Breast epithelium (tissue), 4 donors: ENCODE measurements at regions of chr2 and their contacts with region 1.

Region 1: GRCh38 chr2:216149741-216150140 is 40.6 kb downstream of the XRCC5 start:
- DNase-seq: no peak
- H3K4me3 ChIP-seq: no peak overlapping the region
- H3K27ac ChIP-seq: no peak overlapping the region
- H3K4me1 ChIP-seq: no peaks in the 10 kb centered on the region
- H3K27me3 ChIP-seq: no peaks in the 10 kb centered on the region
- CTCF ChIP-seq: no peak
- POLR2A ChIP-seq: no peak

Region 2: DNA sequence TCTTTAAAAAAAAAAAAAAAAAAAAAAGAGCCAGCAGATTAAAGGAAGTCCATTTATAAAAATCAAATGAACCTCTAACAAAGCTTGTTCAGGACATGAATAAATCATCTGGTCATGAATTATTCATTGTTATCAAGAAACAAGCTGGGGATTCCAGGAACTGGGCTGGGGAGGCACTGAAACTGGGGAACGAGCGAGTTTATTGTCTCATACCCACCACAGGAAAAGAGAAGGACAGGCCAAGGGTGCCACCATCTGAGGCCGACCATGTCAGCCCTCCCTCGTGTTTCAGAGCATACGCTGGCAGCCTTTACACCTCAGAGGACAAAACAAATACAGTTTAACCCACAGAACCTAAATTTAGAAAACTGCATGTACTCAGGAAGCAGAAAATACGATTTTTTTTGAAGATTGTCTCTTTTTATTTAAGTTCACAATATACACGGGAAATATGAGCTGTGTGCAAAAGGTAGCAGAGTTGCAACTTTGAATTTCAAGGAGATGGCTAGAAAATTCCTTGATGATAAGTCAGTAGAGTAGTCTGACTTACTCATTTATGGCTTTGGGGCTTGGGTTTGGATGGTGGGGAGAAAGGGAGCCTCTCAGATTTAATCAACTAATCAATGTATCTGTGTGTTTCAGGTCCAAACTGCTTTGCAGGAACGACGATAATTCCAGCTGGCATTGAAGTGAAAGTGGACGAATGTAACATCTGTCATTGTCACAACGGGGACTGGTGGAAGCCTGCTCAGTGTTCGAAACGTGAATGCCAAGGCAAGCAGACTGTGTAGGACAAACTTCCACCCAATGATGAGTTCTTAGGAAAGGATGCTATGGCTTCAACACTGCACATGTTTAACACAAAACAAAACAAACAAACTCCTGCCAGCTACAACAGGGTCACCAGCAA is 1574.5 kb before region 1 on chr2:
- intact Hi-C with region 1: no loop called
- DNase-seq: no peak
- H3K4me3 ChIP-seq: no peak overlapping the region
- H3K27ac ChIP-seq: no peak overlapping the region
- H3K4me1 ChIP-seq: no peaks in the 10 kb centered on the region
- H3K27me3 ChIP-seq: no peaks in the 10 kb centered on the region
- CTCF ChIP-seq: no peak
- POLR2A ChIP-seq: no peak

Region 3: GRCh38 chr2:216163518-216163917 is 13.8 kb after region 1 on chr2:
- intact Hi-C with region 1: no loop called
- DNase-seq: no peak
- H3K4me3 ChIP-seq: no peak overlapping the region
- H3K27ac ChIP-seq: no peak overlapping the region
- H3K4me1 ChIP-seq: no peaks in the 10 kb centered on the region
- H3K27me3 ChIP-seq: no peaks in the 10 kb centered on the region
- CTCF ChIP-seq: no peak
- POLR2A ChIP-seq: no peak

Region 4: GRCh38 chr2:216777650-216778273 is 628.0 kb after region 1 on chr2:
- intact Hi-C with region 1: no loop called
- DNase-seq: no peak
- H3K4me3 ChIP-seq: no peak overlapping the region
- H3K27ac ChIP-seq: no peak overlapping the region
- H3K4me1 ChIP-seq: no peaks in the 10 kb centered on the region
- H3K27me3 ChIP-seq: no peaks in the 10 kb centered on the region
- CTCF ChIP-seq: peak; percentile 18 to 55 (median 33)
- POLR2A ChIP-seq: no peak

Region 5: GRCh38 chr2:218026676-218027425 is 1877.1 kb after region 1 on chr2:
- intact Hi-C with region 1: loop called (anchors 5 kb)
- DNase-seq: peak; percentile 89 to 92
- H3K4me3 ChIP-seq: no peak overlapping the region
- H3K27ac ChIP-seq: peak overlapping the region; percentile 61 to 79
- H3K4me1 ChIP-seq: peaks cover 0 to 41% of the 10 kb centered on the region in 2 donors
- H3K27me3 ChIP-seq: no peaks in the 10 kb centered on the region
- CTCF ChIP-seq: no peak
- POLR2A ChIP-seq: no peak